ENCODE measurements at regions of chr12 and their contacts with region 1.

Region 1: GRCh38 chr12:131830335-131830913 is 2.2 kb downstream of the MMP17 start:
- DNase-seq: peak; percentile 77
- ATAC-seq: peak; percentile 86
- H3K4me3 ChIP-seq: peak overlapping the region; percentile 38
- H3K27ac ChIP-seq: no peak overlapping the region
- H3K4me1 ChIP-seq: peaks cover 9% of the 10 kb centered on the region; the same call in 1 of the 2 replicates
- H3K27me3 ChIP-seq: no peaks in the 10 kb centered on the region; the same call in 1 of the 2 replicates
- CTCF ChIP-seq: peak; percentile 81
- POLR2A ChIP-seq: peak; percentile 23; the same call in 1 of the 2 replicates
- RAD21 ChIP-seq: peak; percentile 85

Region 2: DNA sequence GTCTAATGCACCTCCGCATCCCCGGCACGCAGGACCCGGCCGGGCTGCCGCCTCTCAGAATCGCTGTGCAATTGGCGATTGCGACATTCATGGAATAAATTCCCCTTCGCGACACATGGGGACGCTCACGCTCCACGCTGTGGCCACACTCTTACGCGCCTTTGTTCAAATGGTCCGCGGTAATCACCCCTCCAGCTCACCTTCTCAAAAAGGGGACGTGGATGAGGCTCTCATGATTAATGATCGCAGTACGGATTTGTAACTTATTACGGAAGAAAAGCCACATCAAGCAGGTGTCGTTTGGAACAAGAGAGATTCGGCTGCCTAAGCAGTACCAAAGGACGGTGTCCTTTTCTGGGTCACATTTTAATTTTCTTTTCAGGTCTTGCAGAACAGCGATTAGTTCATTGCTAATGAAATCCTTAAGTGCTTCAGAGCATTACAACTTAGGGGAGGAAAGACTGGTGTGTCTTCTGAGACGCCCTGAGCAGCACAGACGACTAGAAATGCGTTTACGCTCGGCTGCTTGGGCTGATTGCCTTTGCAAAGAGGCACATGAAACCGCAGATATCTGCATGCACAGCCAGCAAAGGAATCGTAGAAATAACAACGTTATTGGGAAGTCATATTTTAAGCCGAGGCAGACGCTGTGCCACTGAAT is 914.0 kb before region 1 on chr12:
- CTCF ChIA-PET with region 1: no interaction called
- POLR2A ChIA-PET with region 1: no interaction called
- dilution Hi-C with region 1: no loop called
- in situ Hi-C with region 1: no loop called
- intact Hi-C with region 1: loop called (anchors 2 kb)
- DNase-seq: peak; percentile 28
- ATAC-seq: peak; percentile 79
- H3K4me3 ChIP-seq: no peak overlapping the region
- H3K27ac ChIP-seq: no peak overlapping the region
- H3K4me1 ChIP-seq: 0 out of 2 replicates have a peak, but pooled peaks cover 1% of the 10 kb centered on the region
- H3K27me3 ChIP-seq: peaks cover 3% of the 10 kb centered on the region
- CTCF ChIP-seq: peak; percentile 75
- POLR2A ChIP-seq: no peak
- RAD21 ChIP-seq: peak; percentile 80

Region 3: GRCh38 chr12:131104463-131105350 is 725.7 kb before region 1 on chr12:
- CTCF ChIA-PET with region 1: no interaction called
- POLR2A ChIA-PET with region 1: no interaction called
- dilution Hi-C with region 1: no loop called
- in situ Hi-C with region 1: loop called (anchors 25 kb)
- intact Hi-C with region 1: loop called (anchors 1 kb)
- DNase-seq: peak; percentile 16
- ATAC-seq: peak; percentile 96
- H3K4me3 ChIP-seq: no peak overlapping the region
- H3K27ac ChIP-seq: no peak overlapping the region
- H3K4me1 ChIP-seq: no peaks in the 10 kb centered on the region
- H3K27me3 ChIP-seq: no peaks in the 10 kb centered on the region
- CTCF ChIP-seq: peak; percentile 36
- POLR2A ChIP-seq: no peak
- RAD21 ChIP-seq: peak; percentile 33

Region 4: GRCh38 chr12:131896080-131896810 is 65.8 kb after region 1 on chr12:
- CTCF ChIA-PET with region 1: no interaction called
- POLR2A ChIA-PET with region 1: no interaction called
- dilution Hi-C with region 1: no loop called
- in situ Hi-C with region 1: no loop called
- intact Hi-C with region 1: loop called (anchors 5 kb)
- DNase-seq: peak; percentile 89
- ATAC-seq: peak; percentile 78
- H3K4me3 ChIP-seq: peak overlapping the region; percentile 59
- H3K27ac ChIP-seq: peak overlapping the region; percentile 87
- H3K4me1 ChIP-seq: peaks cover 10% of the 10 kb centered on the region
- H3K27me3 ChIP-seq: no peaks in the 10 kb centered on the region; the same call in 1 of the 2 replicates
- CTCF ChIP-seq: no peak
- POLR2A ChIP-seq: peak; percentile 94
- RAD21 ChIP-seq: 0 out of 2 replicates have a peak, but pooled peaks have one; percentile 10

Region 5: GRCh38 chr12:131949431-131950181 is 119.2 kb after region 1 on chr12 and contains the start of gene EP400:
- CTCF ChIA-PET with region 1: no interaction called
- POLR2A ChIA-PET with region 1: no interaction called
- dilution Hi-C with region 1: no loop called
- in situ Hi-C with region 1: no loop called
- intact Hi-C with region 1: loop called (anchors 10 kb)
- DNase-seq: peak; percentile 90
- ATAC-seq: peak; percentile 99
- H3K4me3 ChIP-seq: peak within 1 kb of the TSS; percentile 94
- H3K27ac ChIP-seq: peak within 1 kb of the TSS; percentile 72
- H3K4me1 ChIP-seq: peaks cover 2% of the 10 kb centered on the region
- H3K27me3 ChIP-seq: no peaks in the 10 kb centered on the region
- CTCF ChIP-seq: peak; percentile 76
- POLR2A ChIP-seq: peak; percentile 54
- RAD21 ChIP-seq: peak; percentile 62
- total RNA-seq, gene EP400: 4.3 and 5.3 TPM in 2 replicates

Region 6: GRCh38 chr12:132003846-132004245 is 173.4 kb after region 1 on chr12:
- CTCF ChIA-PET with region 1: no interaction called
- POLR2A ChIA-PET with region 1: no interaction called
- dilution Hi-C with region 1: no loop called
- in situ Hi-C with region 1: no loop called
- intact Hi-C with region 1: loop called (anchors 5 kb)
- DNase-seq: peak; percentile 73
- ATAC-seq: peak; percentile 95
- H3K4me3 ChIP-seq: no peak overlapping the region
- H3K27ac ChIP-seq: peak overlapping the region; percentile 69; the same call in 1 of the 2 replicates
- H3K4me1 ChIP-seq: peaks cover 5% of the 10 kb centered on the region
- H3K27me3 ChIP-seq: no peaks in the 10 kb centered on the region
- CTCF ChIP-seq: no peak
- POLR2A ChIP-seq: no peak
- RAD21 ChIP-seq: no peak

Measured in IMR-90 (cell line).